Endothelial cell of umbilical vein (primary cell): ENCODE measurements at regions of chr2 and their contacts with region 1.

Region 1: DNA sequence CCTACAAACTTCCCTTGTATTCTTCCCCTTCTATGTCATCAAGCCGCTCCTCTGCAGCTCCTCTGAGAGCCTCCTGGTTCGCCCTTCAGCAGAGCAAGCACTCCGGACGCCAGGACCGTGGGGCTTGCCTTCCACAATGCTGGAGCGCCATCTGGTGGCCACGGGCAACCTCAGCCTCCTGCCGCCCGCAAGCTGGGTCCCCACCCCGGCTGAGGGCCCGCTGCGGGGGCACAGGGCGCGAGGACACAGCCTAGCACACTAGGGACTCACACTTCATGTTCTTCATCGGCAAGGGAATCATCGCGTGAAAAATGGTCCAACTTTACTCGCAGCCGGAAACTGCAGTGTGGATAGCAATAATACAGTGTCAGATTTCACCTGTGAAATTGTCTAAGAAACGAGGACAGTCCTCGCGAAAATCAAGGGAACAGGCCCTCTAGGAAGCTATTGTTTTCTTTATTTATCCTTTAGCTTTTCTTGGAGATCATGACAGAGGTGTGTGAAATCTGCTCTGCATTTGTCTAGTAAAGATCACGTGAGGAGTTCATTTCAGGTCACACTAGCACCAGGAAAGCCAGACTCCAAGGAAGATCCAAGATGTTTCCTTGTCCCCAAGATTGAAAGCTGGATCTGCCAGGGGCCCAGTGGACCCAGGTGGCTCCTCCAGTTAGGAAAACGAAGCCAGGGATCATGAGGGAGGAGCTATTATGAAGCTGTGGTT is 5.8 kb downstream of the PRLH start:
- DNase-seq: peak; percentile 82
- H3K4me3 ChIP-seq: no peak overlapping the region
- H3K27ac ChIP-seq: no peak overlapping the region
- H3K4me1 ChIP-seq: no peaks in the 10 kb centered on the region
- H3K27me3 ChIP-seq: no peaks in the 10 kb centered on the region
- CTCF ChIP-seq: peak; percentile 99
- POLR2A ChIP-seq: no peak

Region 2: DNA sequence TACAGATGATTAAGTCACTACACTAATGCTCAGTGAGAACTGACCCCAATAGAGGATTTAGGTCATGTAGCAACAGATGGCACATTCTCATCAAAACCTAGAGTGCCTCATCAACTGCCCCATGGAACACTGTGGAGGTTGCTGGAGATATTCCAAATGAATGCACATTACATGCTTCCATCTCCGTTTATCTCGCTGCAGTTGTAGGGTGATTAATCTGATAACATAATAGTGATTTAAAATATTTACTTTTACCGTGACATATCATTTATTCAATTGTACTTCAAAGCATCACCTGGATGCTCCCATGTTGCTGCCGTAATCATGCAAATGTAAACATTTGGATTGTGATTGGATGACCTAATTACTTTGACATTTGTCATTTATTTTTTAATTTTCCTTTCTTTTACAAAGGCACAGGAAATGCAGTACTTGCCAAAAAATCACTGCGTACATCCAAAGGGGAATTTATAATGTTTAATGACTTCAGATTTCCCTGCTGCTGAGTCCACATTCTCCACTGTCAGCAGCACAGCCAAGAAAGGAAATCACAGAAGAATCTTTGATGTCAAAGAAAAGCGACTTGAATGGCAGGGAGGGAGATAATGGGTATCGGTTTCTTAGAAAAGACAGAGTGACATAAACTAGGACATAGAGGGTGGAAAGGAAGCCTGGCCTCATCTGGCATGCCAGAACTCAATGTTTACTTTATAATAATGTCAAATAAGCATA is 528.1 kb before region 1 on chr2:
- CTCF ChIA-PET with region 1: no interaction called
- POLR2A ChIA-PET with region 1: no interaction called
- dilution Hi-C with region 1: no loop called
- intact Hi-C with region 1: no loop called
- DNase-seq: peak; percentile 50
- H3K4me3 ChIP-seq: no peak overlapping the region
- H3K27ac ChIP-seq: no peak overlapping the region
- H3K4me1 ChIP-seq: peaks cover 19% of the 10 kb centered on the region
- H3K27me3 ChIP-seq: no peaks in the 10 kb centered on the region
- CTCF ChIP-seq: no peak
- POLR2A ChIP-seq: no peak

Region 3: DNA sequence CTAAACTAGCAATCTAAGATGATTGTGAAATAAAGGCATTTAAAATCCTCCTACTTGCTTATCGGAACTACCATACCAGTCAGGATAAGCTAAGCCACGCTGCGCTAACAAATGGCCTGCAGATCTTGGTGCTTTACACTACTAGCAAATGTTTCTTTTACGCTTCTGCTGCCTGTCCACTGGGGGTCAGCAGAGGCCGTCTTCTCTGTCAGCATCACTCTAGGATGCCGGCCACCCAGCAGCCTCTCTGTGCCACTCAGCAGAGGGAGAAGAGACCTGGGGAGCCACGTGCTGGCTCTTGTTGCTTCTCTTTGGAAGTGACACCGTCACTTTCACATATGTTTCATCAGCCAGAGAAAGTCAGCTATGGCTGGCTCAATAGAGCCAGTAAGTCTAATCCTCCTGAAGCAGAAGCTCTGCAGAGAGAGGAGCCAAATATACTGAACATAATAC is 449.9 kb before region 1 on chr2:
- CTCF ChIA-PET with region 1: interaction called, 45 read pairs
- POLR2A ChIA-PET with region 1: no interaction called
- dilution Hi-C with region 1: no loop called
- intact Hi-C with region 1: loop called (anchors 1 kb)
- DNase-seq: peak; percentile 64
- H3K4me3 ChIP-seq: no peak overlapping the region
- H3K27ac ChIP-seq: no peak overlapping the region
- H3K4me1 ChIP-seq: peaks cover 3% of the 10 kb centered on the region
- H3K27me3 ChIP-seq: no peaks in the 10 kb centered on the region
- CTCF ChIP-seq: peak; percentile 64 to 73
- POLR2A ChIP-seq: no peak

Region 4: DNA sequence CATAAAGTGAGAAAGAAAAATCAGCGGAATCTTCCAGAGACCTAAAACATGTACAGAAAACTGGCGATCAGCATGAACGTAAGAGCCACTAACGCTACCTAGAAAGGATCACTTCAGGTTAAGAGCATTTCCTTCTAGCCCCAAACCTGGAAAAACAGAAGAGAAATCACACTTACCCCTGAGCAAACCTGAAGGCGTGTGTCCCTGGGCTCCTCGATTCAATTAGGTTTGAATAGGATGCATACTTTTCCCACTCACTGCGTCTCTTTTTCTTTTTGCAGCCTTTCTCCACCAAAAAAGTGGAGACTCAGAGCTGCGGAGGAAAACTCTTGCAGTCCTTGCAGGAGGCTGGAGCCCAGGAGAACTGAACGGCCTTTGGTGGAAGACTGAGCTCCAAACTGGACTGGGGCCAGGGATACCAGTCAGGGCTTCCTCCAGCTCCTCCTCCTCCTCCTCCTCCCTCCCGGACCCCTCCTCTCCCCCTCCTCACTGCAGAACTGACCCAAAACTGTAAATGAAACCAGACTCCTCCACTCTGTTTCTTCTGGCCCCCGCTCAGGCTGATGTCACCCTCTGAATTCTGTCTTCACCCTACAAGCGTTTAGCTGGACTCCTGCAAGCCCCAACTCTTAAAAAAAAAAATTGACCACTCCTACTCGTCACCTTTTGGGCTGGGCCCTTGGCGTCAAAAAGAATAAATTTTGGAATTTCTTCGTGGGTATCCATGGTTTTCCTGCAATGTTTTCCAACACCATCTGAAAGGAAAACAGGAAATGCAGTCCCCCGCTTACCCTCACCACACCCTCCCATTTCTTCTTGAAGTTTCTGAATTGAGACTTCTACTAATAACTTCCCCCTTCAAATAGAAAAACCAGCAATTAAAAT is 158.2 kb before region 1 on chr2 and contains the start of gene COL6A3:
- CTCF ChIA-PET with region 1: interaction called, 153 read pairs
- POLR2A ChIA-PET with region 1: no interaction called
- dilution Hi-C with region 1: no loop called
- intact Hi-C with region 1: no loop called
- DNase-seq: no peak
- H3K4me3 ChIP-seq: no peak within 1 kb of the TSS
- H3K27ac ChIP-seq: no peak within 1 kb of the TSS
- H3K4me1 ChIP-seq: no peaks in the 10 kb centered on the region
- H3K27me3 ChIP-seq: peaks cover 7 to 15% of the 10 kb centered on the region in 2 experiments
- CTCF ChIP-seq: no peak
- POLR2A ChIP-seq: no peak
- total RNA-seq, gene COL6A3: not detected in 2 replicates

Region 5: GRCh38 chr2:237465515-237466218 is 106.5 kb before region 1 on chr2:
- CTCF ChIA-PET with region 1: interaction called, 101 read pairs
- POLR2A ChIA-PET with region 1: no interaction called
- dilution Hi-C with region 1: no loop called
- intact Hi-C with region 1: no loop called
- DNase-seq: peak; percentile 75
- H3K4me3 ChIP-seq: no peak overlapping the region
- H3K27ac ChIP-seq: peak overlapping the region; percentile 59
- H3K4me1 ChIP-seq: peaks cover 11% of the 10 kb centered on the region
- H3K27me3 ChIP-seq: peaks cover 0 to 2% of the 10 kb centered on the region in 2 experiments
- CTCF ChIP-seq: no peak
- POLR2A ChIP-seq: peak; percentile 52

Region 6: DNA sequence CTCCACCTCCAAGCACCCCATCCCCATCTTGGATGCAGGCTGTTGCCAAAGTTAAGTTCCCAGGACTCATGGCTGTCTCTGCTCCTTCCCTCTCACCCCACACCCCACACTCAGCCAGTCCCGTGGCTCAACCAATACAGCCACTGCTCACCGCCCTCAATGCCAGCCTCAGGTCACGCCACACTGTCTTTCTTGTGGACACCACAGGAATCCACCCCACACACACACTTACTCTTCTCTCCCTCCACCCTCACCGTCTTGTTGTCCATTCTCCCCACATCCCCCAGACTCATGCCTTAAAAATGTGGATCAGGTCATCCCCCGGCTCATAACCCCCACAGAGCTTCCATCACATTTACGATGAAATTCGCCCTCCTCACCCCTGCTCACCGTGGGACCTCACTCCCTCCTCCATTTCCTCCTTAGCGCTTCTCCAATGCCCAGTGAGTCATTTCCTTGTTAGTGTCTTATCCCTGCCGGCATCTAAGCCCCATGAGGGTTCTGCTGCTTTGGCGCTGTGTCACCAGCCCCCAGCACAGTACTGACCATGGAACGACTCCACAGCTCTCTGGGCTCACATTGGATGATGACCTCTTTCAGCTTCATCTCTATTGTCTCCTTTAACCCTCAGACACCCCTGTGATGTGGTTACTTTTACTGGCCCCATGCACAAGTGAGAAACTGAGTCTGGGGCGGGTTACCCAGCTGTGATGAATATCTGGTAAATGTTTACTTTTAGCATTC is 71.3 kb before region 1 on chr2:
- CTCF ChIA-PET with region 1: interaction called, 25 read pairs
- POLR2A ChIA-PET with region 1: no interaction called
- dilution Hi-C with region 1: no loop called
- intact Hi-C with region 1: no loop called
- DNase-seq: peak; percentile 57
- H3K4me3 ChIP-seq: no peak overlapping the region
- H3K27ac ChIP-seq: no peak overlapping the region
- H3K4me1 ChIP-seq: peaks cover 20% of the 10 kb centered on the region
- H3K27me3 ChIP-seq: peaks cover 3 to 4% of the 10 kb centered on the region in 2 experiments
- CTCF ChIP-seq: no peak
- POLR2A ChIP-seq: no peak

Region 7: DNA sequence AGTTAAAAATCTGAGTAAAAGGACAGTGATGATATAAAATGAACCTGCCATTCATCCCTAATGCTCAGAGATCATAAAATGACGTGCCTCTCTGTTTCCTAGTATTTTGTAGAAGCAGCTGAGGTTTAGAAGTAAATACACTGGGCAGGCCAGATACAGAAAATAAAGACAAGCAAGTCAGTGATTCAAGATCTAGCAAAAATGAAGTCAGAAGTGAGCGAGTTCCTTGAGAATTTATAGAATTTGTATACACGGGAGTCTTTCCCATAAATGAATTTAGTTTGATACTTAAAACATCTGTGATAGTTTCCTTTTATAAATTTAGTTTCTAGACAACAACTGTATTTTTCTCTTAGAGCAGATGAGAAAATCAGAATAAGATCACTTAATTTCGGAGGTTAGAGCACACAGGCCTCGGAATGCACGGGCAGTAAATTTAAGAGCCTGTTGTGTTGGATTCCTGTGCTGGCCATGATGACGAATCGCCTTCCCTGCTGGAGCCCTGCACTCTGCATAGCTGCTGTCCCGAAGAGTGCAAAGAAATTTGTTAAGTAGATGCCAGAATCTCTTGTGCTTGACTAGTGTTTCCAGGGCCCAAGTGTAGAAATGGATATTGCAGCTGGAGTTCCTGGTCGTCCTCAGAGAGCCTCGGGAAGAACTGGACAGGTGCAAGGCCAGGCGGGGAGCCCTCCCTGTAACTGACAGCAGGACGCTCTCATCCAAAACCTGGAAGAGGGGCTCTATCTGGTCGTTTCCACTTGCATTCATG is 142.7 kb after region 1 on chr2:
- CTCF ChIA-PET with region 1: no interaction called
- POLR2A ChIA-PET with region 1: no interaction called
- dilution Hi-C with region 1: no loop called
- intact Hi-C with region 1: no loop called
- DNase-seq: peak; percentile 60
- H3K4me3 ChIP-seq: peak overlapping the region in 1 of 3 experiments; percentile 34
- H3K27ac ChIP-seq: peak overlapping the region; percentile 57
- H3K4me1 ChIP-seq: peaks cover 26% of the 10 kb centered on the region
- H3K27me3 ChIP-seq: no peaks in the 10 kb centered on the region
- CTCF ChIP-seq: no peak
- POLR2A ChIP-seq: no peak

Region 8: DNA sequence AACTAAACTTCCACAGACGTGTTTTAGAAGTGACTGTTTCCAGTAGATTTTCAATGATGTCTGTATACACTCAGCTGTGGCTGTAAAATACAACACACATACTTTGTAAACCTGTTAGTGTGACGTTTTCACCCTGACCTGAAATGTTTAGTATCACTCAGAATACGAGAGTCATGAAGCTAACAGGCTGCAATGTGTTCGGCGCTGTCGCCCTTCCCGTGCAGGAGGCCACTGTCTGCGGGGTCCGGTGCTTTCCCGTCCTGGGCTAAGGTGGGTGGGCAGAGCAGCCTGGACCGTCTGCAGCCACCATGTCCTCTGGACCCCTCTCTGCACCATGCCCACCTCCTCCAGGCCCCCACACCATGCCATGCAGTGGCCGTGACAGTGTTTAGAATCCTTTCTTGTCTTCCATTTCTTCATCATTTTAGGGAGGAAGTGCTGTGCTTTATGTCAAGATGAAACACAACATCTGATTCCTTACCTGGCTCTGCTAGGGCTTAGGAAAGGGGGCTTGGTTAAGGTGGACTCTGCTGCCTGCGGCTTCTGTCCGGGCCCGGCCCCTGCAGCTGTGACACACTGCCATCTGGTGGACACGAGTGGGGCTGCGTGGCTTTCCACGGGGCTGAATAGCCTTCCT is 172.6 kb after region 1 on chr2:
- CTCF ChIA-PET with region 1: interaction called, 25 read pairs
- POLR2A ChIA-PET with region 1: no interaction called
- dilution Hi-C with region 1: no loop called
- intact Hi-C with region 1: no loop called
- DNase-seq: peak; percentile 86
- H3K4me3 ChIP-seq: no peak overlapping the region
- H3K27ac ChIP-seq: peak overlapping the region; percentile 80
- H3K4me1 ChIP-seq: peaks cover 21% of the 10 kb centered on the region
- H3K27me3 ChIP-seq: no peaks in the 10 kb centered on the region
- CTCF ChIP-seq: peak; percentile 96 to 97
- POLR2A ChIP-seq: peak; percentile 31